AG04449 (cell line): ENCODE measurements at regions of chr16 and their contacts with region 1.

Region 1: GRCh38 chr16:88941913-88942909 is 34.8 kb downstream of the CBFA2T3 start:
- DNase-seq: no peak
- H3K4me3 ChIP-seq: no peak overlapping the region
- CTCF ChIP-seq: peak; percentile 65

Region 2: GRCh38 chr16:88957887-88958577 is 15.8 kb after region 1 on chr16:
- CTCF ChIA-PET with region 1: interaction called, 12 read pairs
- POLR2A ChIA-PET with region 1: no interaction called
- DNase-seq: no peak
- H3K4me3 ChIP-seq: no peak overlapping the region
- CTCF ChIP-seq: no peak

Region 3: DNA sequence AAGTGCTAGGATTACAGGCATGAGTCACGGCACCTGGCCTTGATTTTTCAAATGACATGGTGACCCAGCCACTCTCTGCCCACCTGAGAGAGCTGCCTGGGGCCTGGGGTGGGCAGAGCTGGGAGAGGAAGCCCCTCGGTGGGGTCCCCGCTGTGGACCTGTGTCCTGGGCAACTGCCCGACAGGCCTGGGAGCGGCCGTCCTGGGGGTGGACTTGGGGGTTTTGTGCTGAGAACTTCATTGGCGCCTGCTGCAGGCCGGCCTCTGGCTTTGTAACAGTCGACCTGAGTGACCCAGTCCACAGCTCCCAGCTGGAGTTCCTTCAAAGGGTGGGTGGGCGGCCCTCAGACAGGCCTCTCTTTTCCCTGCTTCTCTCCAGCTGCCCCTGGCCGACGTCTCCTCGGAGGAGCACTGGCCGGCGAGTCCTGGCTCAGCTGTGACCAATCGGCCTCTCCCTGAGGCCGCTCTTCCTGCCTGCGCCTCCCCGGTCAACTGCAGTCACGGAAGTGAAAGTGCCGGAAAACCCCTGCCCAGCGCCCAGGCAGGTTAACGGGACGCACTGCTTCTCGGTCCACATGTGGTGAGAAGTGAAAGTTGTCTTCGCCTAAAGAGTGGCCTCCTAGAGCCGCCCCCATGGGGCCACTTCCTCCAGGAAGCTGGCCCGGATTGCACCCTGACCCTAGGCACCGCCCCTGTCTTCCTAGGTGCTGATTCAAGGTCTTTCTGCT is 29.3 kb after region 1 on chr16:
- CTCF ChIA-PET with region 1: no interaction called
- POLR2A ChIA-PET with region 1: no interaction called
- DNase-seq: no peak
- H3K4me3 ChIP-seq: no peak overlapping the region
- CTCF ChIP-seq: no peak